ENCODE measurements at regions of chr15 and their contacts with region 1.

Region 1: GRCh38 chr15:83064859-83065258 is 2.2 kb downstream of the BTBD1 start:
- DNase-seq: no peak
- H3K4me3 ChIP-seq: peak overlapping the region; percentile 6 to 94 (median 92)
- H3K27ac ChIP-seq: no peak overlapping the region
- H3K4me1 ChIP-seq: peaks cover 2 to 24% (median 10%) of the 10 kb centered on the region in 3 donors
- H3K27me3 ChIP-seq: no peaks in the 10 kb centered on the region
- CTCF ChIP-seq: no peak

Region 2: DNA sequence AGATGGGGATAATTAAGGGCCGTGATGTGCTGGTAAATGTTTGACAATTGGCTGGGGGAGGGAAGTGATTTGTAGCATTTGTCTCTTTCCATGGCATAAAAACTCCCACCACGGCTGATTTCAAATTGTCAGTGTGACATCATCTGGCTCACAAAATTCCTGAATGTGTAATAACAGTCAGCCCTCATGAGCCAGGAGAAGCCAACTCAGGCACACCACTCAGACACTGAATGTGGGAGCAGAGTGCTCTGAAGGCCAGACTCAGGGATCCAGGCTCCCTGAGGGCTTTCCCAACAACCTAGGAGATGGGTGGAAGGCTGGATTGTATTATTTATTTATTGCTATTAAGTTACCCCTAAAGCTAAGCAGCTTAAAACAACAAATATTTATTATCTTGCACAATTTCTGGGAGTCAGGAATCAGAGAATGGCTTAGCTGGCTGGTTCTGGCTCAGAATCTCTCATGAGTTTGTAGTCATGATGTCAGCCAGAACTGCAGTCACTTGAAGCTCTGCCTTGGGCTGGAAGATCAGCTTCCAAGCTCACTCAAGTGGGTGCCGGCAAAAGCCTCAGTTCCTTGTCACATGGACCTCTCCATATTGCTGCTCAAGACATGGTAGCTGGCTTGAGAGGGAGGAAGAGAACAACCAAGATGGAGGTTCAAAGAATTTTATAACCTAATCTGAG is 411.2 kb before region 1 on chr15:
- intact Hi-C with region 1: no loop called
- DNase-seq: no peak
- H3K4me3 ChIP-seq: no peak overlapping the region
- H3K27ac ChIP-seq: no peak overlapping the region
- H3K4me1 ChIP-seq: no peaks in the 10 kb centered on the region
- H3K27me3 ChIP-seq: peaks cover 10% of the 10 kb centered on the region
- CTCF ChIP-seq: no peak

Region 3: GRCh38 chr15:83030021-83030420 is 34.8 kb before region 1 on chr15:
- intact Hi-C with region 1: loop called (anchors 5 kb)
- DNase-seq: no peak
- H3K4me3 ChIP-seq: no peak overlapping the region
- H3K27ac ChIP-seq: no peak overlapping the region
- H3K4me1 ChIP-seq: no peaks in the 10 kb centered on the region
- H3K27me3 ChIP-seq: no peaks in the 10 kb centered on the region
- CTCF ChIP-seq: no peak